ENCODE measurements at regions of chr22 and their contacts with region 1.

Region 1: GRCh38 chr22:25334162-25334490 is 114.7 kb downstream of the CRYBB2 start:
- DNase-seq: peak; percentile 77
- H3K4me3 ChIP-seq: no peak overlapping the region
- H3K27ac ChIP-seq: no peak overlapping the region
- H3K4me1 ChIP-seq: no peaks in the 10 kb centered on the region
- H3K27me3 ChIP-seq: no peaks in the 10 kb centered on the region
- CTCF ChIP-seq: peak; percentile 71

Region 2: DNA sequence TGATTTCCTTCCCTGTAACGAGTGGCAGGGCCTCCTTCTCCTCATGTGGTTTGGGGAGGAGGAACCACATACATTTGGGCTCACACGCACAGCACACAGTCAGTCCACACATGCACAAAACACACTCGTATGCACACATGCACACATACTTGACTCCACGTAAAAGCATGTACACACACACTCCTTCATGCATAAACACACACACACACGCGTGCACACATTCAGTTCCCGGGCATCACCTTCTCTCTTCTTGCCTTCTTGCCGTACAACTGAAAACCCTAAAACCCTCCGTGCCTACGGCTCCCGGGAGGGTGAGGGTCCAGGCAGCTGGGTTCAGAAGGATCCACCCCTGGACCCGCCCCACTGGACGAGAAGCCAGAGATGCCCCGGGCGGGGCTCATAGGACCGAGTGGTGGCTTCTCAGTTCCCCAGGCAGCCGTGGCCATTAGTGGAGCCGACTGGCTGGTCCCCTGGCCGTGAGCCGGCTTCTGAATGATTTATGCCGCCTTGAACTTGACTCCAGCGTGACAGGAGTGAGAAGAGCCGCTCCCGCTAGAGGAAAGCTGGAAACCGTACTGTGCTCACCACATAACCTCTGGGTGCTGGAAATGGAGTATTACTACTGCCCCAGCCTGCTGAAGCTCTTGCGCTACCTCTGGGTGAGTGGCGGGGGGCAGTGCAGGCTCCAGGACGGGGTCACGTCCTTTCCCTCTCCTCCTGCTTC is 264.2 kb before region 1 on chr22:
- CTCF ChIA-PET with region 1: no interaction called
- POLR2A ChIA-PET with region 1: no interaction called
- intact Hi-C with region 1: loop called (anchors 10 kb)
- DNase-seq: no peak
- H3K4me3 ChIP-seq: no peak overlapping the region
- H3K27ac ChIP-seq: no peak overlapping the region
- H3K4me1 ChIP-seq: no peaks in the 10 kb centered on the region
- H3K27me3 ChIP-seq: no peaks in the 10 kb centered on the region
- CTCF ChIP-seq: no peak

Region 3: GRCh38 chr22:25202290-25202921 is 131.7 kb before region 1 on chr22:
- CTCF ChIA-PET with region 1: no interaction called
- POLR2A ChIA-PET with region 1: no interaction called
- intact Hi-C with region 1: loop called (anchors 2 kb)
- DNase-seq: peak; percentile 75
- H3K4me3 ChIP-seq: no peak overlapping the region
- H3K27ac ChIP-seq: no peak overlapping the region
- H3K4me1 ChIP-seq: no peaks in the 10 kb centered on the region
- H3K27me3 ChIP-seq: no peaks in the 10 kb centered on the region
- CTCF ChIP-seq: peak; percentile 90

Region 4: DNA sequence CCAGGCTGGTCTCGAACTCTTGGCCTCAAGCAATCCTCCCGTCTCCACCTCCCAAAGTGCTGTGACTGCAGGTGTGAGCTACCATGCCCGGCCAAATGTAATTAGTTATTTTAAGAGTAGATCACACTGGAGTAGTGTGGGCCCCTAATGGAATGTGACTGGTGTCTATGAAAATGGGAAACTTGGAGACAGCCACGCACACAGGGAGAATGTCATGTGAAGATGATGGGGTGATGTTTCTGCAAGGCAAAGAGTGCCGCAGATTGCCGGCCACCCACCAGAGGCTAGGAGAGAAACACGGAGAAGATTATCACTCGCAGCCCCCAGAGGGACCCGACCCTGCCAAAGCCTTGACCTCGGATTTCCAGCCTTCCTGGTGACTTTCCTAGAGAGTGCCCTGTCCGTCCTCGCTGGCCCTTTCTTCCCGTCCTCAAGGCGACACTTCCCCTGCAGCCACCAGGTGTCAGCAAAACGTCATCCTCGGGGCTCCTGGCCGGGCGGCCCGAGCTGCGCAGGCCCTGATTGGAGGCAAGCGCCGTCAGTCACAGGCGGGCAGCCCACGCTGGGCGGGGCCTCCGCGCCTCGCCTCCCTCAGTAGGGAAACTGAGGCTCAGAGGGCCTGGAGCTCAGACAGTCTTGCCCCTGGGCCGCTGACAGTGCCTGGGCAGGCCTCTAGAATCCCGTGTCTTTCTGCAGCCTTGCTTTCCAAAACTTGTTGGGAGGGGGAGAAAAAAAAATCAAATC is 98.4 kb before region 1 on chr22:
- CTCF ChIA-PET with region 1: interaction called, 4 read pairs
- POLR2A ChIA-PET with region 1: no interaction called
- intact Hi-C with region 1: loop called (anchors 5 kb)
- DNase-seq: peak; percentile 84
- H3K4me3 ChIP-seq: no peak overlapping the region
- H3K27ac ChIP-seq: no peak overlapping the region
- H3K4me1 ChIP-seq: no peaks in the 10 kb centered on the region
- H3K27me3 ChIP-seq: no peaks in the 10 kb centered on the region
- CTCF ChIP-seq: peak; percentile 88